ENCODE measurements at regions of chr22 and their contacts with region 1.

Region 1: GRCh38 chr22:50641696-50642607 is 14.0 kb upstream of the ARSA start:
- DNase-seq: no peak
- ATAC-seq: no peak
- H3K4me3 ChIP-seq: no peak overlapping the region
- H3K27ac ChIP-seq: no peak overlapping the region
- H3K4me1 ChIP-seq: no peaks in the 10 kb centered on the region
- H3K27me3 ChIP-seq: peaks cover 2% of the 10 kb centered on the region
- CTCF ChIP-seq: no peak

Region 2: DNA sequence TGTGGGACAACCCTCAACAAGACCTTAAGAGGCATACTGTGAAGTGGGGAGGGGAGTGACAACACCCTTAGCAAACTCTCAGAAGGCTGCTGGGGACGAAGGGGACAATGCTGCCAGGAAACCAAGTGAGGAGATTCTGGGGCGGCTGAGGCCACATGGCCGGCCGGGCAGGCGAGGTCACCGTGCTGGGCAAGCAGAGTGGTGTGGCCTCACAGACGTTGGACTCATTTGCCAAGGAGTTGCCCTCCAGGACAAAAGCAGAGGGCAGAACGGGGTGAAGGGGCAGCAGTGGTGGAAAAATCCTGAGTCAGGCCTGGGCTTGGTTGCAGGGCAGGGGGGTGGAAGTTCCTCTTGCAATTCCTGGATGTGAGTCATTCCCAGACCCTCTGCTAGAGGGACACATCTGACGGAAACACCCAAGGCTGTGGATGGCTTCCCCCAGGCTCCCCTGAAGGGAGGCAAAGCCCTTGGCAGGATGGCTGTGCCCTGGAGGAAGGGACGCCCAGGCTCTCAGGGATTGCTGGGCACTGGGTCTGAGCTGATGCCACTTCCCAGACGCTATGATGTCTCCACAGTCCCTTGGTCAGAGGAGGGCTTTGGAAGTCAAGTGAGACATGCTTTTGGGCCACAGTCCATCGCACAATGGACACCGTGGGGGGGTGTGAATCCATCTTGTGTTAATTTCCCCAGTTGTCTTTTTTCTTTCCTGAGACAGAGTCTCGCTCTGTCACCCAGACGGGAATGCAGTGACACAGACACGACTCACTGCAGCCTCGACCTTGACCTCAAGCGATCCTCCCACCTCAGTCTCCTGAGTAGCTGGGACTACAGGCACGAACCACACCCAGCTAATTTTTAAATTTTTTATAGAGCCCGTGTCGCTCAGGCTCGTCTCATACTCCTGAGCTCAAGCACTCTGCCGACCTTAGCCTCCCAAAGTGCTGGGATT is 14.4 kb after region 1 on chr22:
- CTCF ChIA-PET with region 1: interaction called, 10 read pairs
- POLR2A ChIA-PET with region 1: no interaction called
- in situ Hi-C with region 1: no loop called
- intact Hi-C with region 1: no loop called
- DNase-seq: no peak
- ATAC-seq: peak; percentile 82
- H3K4me3 ChIP-seq: no peak overlapping the region
- H3K27ac ChIP-seq: no peak overlapping the region
- H3K4me1 ChIP-seq: no peaks in the 10 kb centered on the region
- H3K27me3 ChIP-seq: no peaks in the 10 kb centered on the region
- CTCF ChIP-seq: no peak

Region 3: GRCh38 chr22:50714631-50715179 is 72.8 kb after region 1 on chr22:
- CTCF ChIA-PET with region 1: no interaction called
- POLR2A ChIA-PET with region 1: interaction called, 14 read pairs
- in situ Hi-C with region 1: no loop called
- intact Hi-C with region 1: no loop called
- DNase-seq: no peak
- ATAC-seq: no peak
- H3K4me3 ChIP-seq: no peak overlapping the region
- H3K27ac ChIP-seq: no peak overlapping the region
- H3K4me1 ChIP-seq: no peaks in the 10 kb centered on the region
- H3K27me3 ChIP-seq: no peaks in the 10 kb centered on the region
- CTCF ChIP-seq: no peak